ENCODE measurements at regions of chr13 and their contacts with region 1.

Region 1: DNA sequence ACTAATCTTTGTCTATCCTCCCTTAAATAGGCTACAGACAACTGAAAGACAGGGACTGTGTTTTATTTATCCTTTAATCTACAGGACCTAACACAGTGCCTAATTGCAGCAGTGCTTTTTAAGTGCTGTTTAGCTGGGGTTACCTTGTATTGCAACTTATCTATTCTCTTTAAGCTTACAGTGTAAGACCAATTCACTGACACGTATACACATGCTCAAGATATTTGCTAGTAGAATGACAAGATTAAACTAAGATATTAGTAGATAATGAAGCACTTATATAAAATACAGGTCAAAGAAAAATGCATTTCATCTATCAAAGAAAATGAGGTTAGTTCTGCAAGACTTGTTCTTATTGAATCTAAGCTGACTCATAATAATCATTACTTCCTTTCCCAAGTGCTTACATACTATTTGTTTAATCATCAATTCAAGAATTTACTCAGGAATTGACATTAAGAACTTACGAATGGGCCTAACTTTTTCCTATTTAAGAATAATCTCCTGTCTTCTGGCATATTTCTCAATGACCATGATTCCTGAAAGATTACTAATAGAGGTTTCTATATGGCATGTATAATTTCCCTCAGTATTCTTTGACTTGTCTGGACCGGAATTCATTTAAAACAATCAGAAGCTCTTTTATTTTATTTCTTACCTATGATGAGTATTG is 75.8 kb upstream of the MAB21L1 start:
- DNase-seq: no peak

Region 2: DNA sequence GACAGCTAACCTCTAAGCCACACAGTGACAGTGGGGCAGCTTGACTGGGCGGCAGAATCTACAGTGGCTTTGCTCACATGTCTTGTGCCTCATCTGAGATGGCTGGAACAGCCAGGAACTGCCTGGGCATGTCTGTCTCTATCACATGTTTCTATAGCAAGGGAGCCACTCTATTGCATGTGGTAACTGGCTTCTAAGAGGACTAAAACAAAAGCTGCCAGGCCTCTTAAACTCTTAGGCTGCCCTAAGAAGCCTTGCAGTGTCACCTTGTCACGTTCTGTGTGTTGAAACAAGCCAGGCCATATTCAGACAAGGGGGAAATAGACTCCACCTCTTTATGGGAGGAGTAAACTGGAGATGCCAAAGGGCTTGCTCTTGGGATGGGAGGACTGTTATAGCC is 47.1 kb after region 1 on chr13:
- intact Hi-C with region 1: loop called (anchors 5 kb)
- DNase-seq: no peak

Measured in cardiac septum (tissue), 1 donor.